IMR-90 (cell line): ENCODE measurements at regions of chr2 and their contacts with region 1.

Region 1: DNA sequence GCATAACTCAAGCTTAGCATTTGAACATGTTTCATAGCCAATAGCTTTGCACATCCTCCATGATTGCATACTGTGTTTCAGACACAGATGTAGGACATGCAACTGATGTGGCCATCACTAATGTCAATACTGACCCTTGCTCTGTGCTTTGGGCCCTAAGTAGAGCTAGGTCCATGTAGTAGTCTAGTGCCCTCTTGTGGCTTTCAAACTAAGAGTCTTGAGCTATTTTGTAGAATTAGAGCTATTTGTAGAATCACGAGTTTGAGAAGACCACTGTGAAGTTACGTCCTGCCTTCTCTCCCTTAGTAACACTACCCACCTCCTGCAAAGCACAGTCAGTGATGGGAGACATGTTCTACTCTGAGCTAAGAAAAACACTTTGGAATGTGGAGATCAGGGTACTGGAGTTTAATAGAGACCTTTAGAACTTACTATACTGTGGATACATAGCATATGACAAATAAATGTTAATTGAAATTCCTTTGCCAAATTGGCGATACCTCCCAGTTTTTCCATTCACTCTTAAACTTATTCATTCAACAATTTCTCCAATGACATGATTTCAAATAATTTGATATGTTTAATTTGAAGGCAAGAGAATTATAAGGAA is 306.5 kb upstream of the TNP1 start:
- DNase-seq: peak; percentile 73
- ATAC-seq: peak; percentile 49
- H3K4me3 ChIP-seq: no peak overlapping the region
- H3K27ac ChIP-seq: peak overlapping the region; percentile 65
- H3K4me1 ChIP-seq: peaks cover 19% of the 10 kb centered on the region
- H3K27me3 ChIP-seq: no peaks in the 10 kb centered on the region
- CTCF ChIP-seq: peak; percentile 66
- POLR2A ChIP-seq: no peak
- RAD21 ChIP-seq: peak; percentile 85

Region 2: GRCh38 chr2:216880509-216881184 is 285.7 kb before region 1 on chr2:
- CTCF ChIA-PET with region 1: interaction called, 3 read pairs
- POLR2A ChIA-PET with region 1: no interaction called
- dilution Hi-C with region 1: no loop called
- in situ Hi-C with region 1: no loop called
- intact Hi-C with region 1: loop called (anchors 10 kb)
- DNase-seq: peak; percentile 86
- ATAC-seq: peak; percentile 90
- H3K4me3 ChIP-seq: no peak overlapping the region
- H3K27ac ChIP-seq: peak overlapping the region; percentile 91
- H3K4me1 ChIP-seq: peaks cover 15% of the 10 kb centered on the region
- H3K27me3 ChIP-seq: no peaks in the 10 kb centered on the region
- CTCF ChIP-seq: no peak
- POLR2A ChIP-seq: no peak
- RAD21 ChIP-seq: no peak

Region 3: DNA sequence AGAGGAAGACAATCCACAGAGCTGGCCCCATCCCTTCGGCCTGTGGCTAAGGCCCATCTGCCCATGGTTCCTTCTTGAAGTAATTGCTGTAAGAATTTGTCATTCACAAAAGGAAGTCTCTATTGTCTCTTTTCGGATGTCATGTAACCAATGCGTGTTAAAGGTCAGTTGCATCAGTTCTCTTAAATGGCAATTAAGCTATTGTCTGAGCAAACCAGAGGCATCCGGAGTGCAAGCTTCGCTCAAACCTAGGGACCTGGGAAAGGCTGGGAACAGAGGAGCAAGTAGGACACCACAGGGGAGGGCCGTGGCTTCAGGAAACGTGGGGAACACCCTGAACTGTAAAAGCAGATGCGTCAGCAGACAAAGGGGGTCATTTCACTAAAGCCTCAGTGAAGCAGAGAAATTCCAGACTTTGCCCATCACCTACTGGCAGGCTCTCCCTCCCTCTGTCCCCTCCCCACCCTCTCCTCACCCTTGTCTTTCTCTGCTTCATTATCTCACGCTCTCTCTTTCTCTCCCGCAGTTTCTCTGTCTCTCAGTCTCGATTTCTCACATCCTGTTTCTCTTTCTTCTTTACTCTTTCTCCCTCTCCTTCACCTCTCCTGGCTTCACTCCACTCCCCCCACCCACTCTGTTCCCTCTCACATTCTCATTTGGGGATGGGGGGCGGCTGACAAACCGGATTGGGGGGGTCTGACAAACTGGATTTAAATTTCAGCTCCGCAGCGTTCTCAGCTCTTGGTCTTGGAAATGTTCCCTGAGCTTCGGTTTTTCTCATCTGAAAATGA is 101.9 kb before region 1 on chr2:
- CTCF ChIA-PET with region 1: interaction called, 3 read pairs
- POLR2A ChIA-PET with region 1: no interaction called
- dilution Hi-C with region 1: no loop called
- in situ Hi-C with region 1: no loop called
- intact Hi-C with region 1: loop called (anchors 5 kb)
- DNase-seq: no peak
- ATAC-seq: no peak
- H3K4me3 ChIP-seq: no peak overlapping the region
- H3K27ac ChIP-seq: peak overlapping the region; percentile 62
- H3K4me1 ChIP-seq: peaks cover 14% of the 10 kb centered on the region
- H3K27me3 ChIP-seq: no peaks in the 10 kb centered on the region
- CTCF ChIP-seq: no peak
- POLR2A ChIP-seq: no peak
- RAD21 ChIP-seq: no peak

Region 4: GRCh38 chr2:217075268-217076057 is 90.9 kb before region 1 on chr2:
- CTCF ChIA-PET with region 1: no interaction called
- POLR2A ChIA-PET with region 1: no interaction called
- dilution Hi-C with region 1: no loop called
- in situ Hi-C with region 1: no loop called
- intact Hi-C with region 1: no loop called
- DNase-seq: peak; percentile 69
- ATAC-seq: peak; percentile 67
- H3K4me3 ChIP-seq: no peak overlapping the region
- H3K27ac ChIP-seq: peak overlapping the region; percentile 42; the same call in 1 of the 2 replicates
- H3K4me1 ChIP-seq: peaks cover 10% of the 10 kb centered on the region
- H3K27me3 ChIP-seq: no peaks in the 10 kb centered on the region
- CTCF ChIP-seq: no peak
- POLR2A ChIP-seq: no peak
- RAD21 ChIP-seq: no peak

Region 5: GRCh38 chr2:217105733-217106649 is 60.4 kb before region 1 on chr2:
- CTCF ChIA-PET with region 1: interaction called, 6 read pairs
- POLR2A ChIA-PET with region 1: interaction called, 3 read pairs
- dilution Hi-C with region 1: no loop called
- in situ Hi-C with region 1: no loop called
- intact Hi-C with region 1: loop called (anchors 5 kb)
- DNase-seq: peak; percentile 95
- ATAC-seq: peak; percentile 86
- H3K4me3 ChIP-seq: no peak overlapping the region
- H3K27ac ChIP-seq: peak overlapping the region; percentile 99
- H3K4me1 ChIP-seq: peaks cover 23% of the 10 kb centered on the region
- H3K27me3 ChIP-seq: no peaks in the 10 kb centered on the region
- CTCF ChIP-seq: no peak
- POLR2A ChIP-seq: peak; percentile 68; the same call in 1 of the 2 replicates
- RAD21 ChIP-seq: peak; percentile 11; the same call in 1 of the 2 replicates

Region 6: GRCh38 chr2:217193431-217194340 is 27.3 kb after region 1 on chr2:
- CTCF ChIA-PET with region 1: no interaction called
- POLR2A ChIA-PET with region 1: no interaction called
- dilution Hi-C with region 1: no loop called
- in situ Hi-C with region 1: no loop called
- intact Hi-C with region 1: no loop called
- DNase-seq: no peak
- ATAC-seq: no peak
- H3K4me3 ChIP-seq: no peak overlapping the region
- H3K27ac ChIP-seq: no peak overlapping the region
- H3K4me1 ChIP-seq: peaks cover 4% of the 10 kb centered on the region
- H3K27me3 ChIP-seq: no peaks in the 10 kb centered on the region
- CTCF ChIP-seq: no peak
- POLR2A ChIP-seq: no peak
- RAD21 ChIP-seq: no peak

Region 7: DNA sequence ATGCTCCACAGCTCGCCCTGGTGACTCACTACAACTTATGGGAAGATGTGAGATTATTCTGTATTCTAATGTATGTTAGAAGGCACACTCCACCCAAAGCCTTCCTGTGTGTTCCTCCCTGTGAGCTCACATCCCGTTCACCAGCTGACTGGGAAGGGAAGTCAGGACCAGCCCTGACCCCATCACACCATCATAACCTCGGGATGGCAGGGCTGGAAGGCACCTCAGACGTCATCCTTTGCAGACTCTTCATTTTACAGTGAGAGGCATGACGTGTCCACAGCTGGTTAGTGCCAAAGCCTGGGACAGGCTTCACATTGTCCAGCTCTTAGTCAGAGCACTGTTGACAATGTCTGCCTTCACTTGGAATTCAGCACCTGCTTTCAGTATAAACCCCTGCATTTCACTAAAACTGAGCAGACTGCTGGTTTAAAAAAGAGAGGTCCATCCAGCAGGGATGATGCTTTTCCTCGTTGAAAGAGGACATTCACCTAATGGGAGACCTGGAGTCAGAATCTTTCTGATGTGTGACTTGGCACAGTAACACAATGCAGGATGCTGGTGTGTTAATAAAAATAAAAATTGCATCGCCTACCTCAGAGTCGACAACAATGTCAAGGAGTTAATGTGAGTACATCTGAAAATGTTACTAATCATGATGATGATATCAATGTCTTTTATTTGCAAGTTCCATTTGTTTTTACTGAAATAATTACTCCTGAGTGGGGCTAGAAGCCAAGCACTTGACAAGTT is 111.5 kb after region 1 on chr2:
- CTCF ChIA-PET with region 1: no interaction called
- POLR2A ChIA-PET with region 1: no interaction called
- dilution Hi-C with region 1: no loop called
- in situ Hi-C with region 1: no loop called
- intact Hi-C with region 1: loop called (anchors 5 kb)
- DNase-seq: peak; percentile 100
- ATAC-seq: peak; percentile 77
- H3K4me3 ChIP-seq: peak overlapping the region; percentile 22; the same call in 1 of the 2 replicates
- H3K27ac ChIP-seq: peak overlapping the region; percentile 91
- H3K4me1 ChIP-seq: peaks cover 13% of the 10 kb centered on the region
- H3K27me3 ChIP-seq: no peaks in the 10 kb centered on the region
- CTCF ChIP-seq: no peak
- POLR2A ChIP-seq: peak; percentile 50; the same call in 1 of the 2 replicates
- RAD21 ChIP-seq: peak; percentile 20; the same call in 1 of the 2 replicates

Region 8: DNA sequence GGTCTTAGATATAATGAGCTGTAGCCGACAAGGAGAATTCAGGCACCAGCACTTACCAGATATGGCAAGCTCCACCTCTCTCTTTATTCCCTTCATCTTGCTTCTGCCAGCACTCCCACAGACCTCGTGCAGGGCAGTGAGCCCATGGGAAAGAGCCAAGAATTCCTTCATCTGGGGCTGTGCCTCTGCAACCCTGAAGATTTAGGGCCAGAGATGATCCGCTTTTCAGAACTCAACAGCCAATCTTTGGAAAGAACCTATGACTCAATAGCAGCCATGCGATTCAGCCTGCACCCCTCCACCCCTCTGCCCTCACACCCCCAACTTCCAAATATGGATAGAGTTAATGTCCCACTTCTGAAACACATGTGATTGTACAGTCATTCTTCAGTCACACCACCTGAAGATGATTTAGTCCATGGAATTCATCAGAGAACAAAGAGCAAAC is 227.3 kb after region 1 on chr2:
- CTCF ChIA-PET with region 1: no interaction called
- POLR2A ChIA-PET with region 1: no interaction called
- dilution Hi-C with region 1: no loop called
- in situ Hi-C with region 1: no loop called
- intact Hi-C with region 1: loop called (anchors 1 kb)
- DNase-seq: peak; percentile 96
- ATAC-seq: peak; percentile 80
- H3K4me3 ChIP-seq: no peak overlapping the region
- H3K27ac ChIP-seq: peak overlapping the region; percentile 81
- H3K4me1 ChIP-seq: peaks cover 24% of the 10 kb centered on the region
- H3K27me3 ChIP-seq: no peaks in the 10 kb centered on the region
- CTCF ChIP-seq: no peak
- POLR2A ChIP-seq: no peak
- RAD21 ChIP-seq: no peak